CD8-positive, alpha-beta T cell (primary cell): ENCODE measurements at regions of chr22 and their contacts with region 1.

Region 1: GRCh38 chr22:40856513-40857308 is at the starts of genes ST13 and XPNPEP3:
- DNase-seq: peak; percentile 92 to 98 (median 97)
- ATAC-seq: peak; percentile 88
- H3K4me3 ChIP-seq: peak within 1 kb of the TSS; percentile 85 to 97
- H3K4me3 Mint-ChIP-seq: peak within 1 kb of the TSS; percentile 98
- H3K27ac ChIP-seq: peak within 1 kb of the TSS; percentile 97 to 99
- H3K27ac Mint-ChIP-seq: peak within 1 kb of the TSS; percentile 100
- H3K4me1 ChIP-seq: peaks cover 40% of the 10 kb centered on the region
- H3K4me1 Mint-ChIP-seq: peaks cover 65% of the 10 kb centered on the region
- H3K27me3 ChIP-seq: no peaks in the 10 kb centered on the region
- H3K27me3 Mint-ChIP-seq: no peaks in the 10 kb centered on the region
- CTCF ChIP-seq: peak; percentile 42
- total RNA-seq, gene ST13: 143 to 160 TPM
- total RNA-seq, gene XPNPEP3: 13.9 to 15.2 TPM

Region 2: GRCh38 chr22:40636380-40637182 is 220.1 kb before region 1 on chr22 and contains the start of gene MRTFA:
- CTCF ChIA-PET with region 1: no interaction called
- POLR2A ChIA-PET with region 1: interaction called, 3 read pairs
- intact Hi-C with region 1: loop called (anchors 1 kb)
- DNase-seq: peak; percentile 98 to 100 (median 99)
- ATAC-seq: peak; percentile 93
- H3K4me3 ChIP-seq: peak within 1 kb of the TSS; percentile 98 to 100
- H3K4me3 Mint-ChIP-seq: peak within 1 kb of the TSS; percentile 99
- H3K27ac ChIP-seq: peak within 1 kb of the TSS; percentile 89
- H3K27ac Mint-ChIP-seq: peak within 1 kb of the TSS; percentile 98
- H3K4me1 ChIP-seq: peaks cover 34% of the 10 kb centered on the region
- H3K4me1 Mint-ChIP-seq: peaks cover 45% of the 10 kb centered on the region
- H3K27me3 ChIP-seq: no peaks in the 10 kb centered on the region
- H3K27me3 Mint-ChIP-seq: no peaks in the 10 kb centered on the region
- CTCF ChIP-seq: no peak
- total RNA-seq, gene MRTFA: 53.7 to 56.7 TPM

Region 3: DNA sequence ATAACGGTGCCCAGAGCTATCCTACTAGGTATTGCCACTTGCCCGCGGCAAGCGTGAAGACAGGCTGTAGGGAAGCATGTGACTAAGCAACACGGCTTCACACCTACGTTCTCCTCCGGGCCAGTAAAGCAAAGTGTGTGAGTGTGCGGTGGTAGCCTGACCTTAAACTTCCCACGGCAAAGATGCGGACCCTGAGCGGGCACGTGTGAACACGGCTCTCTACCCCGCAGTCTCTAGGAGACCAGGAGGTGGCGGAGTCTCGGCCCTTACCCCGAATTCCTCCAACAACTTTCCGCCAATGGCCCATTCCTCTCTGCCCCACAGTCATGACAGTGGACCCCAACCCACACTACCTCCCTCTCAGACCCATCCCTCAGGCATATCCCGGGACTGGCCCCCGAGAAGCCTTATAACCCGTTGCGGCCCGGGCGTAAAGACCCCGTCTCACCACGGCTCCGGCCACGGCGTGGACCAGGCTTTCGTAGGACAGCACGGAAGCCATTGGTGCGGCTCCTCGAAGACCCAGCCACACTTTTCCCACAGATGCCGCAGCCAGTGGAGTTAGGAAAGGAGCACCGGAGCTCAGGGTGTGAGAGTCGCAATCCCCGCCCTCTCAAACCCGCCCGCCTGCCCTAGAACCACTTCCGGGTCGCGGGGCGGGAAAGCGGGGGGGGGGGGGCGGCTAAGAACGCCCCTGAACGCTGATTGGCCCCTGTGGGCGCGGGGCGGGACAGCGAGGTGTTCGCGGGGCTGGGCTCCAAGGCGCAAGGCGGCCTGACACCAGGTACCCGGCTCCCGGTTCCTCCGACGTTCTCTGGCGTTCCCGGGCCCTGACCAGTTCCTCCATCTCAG is 37.7 kb before region 1 on chr22 and contains the start of gene SLC25A17:
- CTCF ChIA-PET with region 1: interaction called, 5 read pairs
- POLR2A ChIA-PET with region 1: interaction called, 6 read pairs
- intact Hi-C with region 1: loop called (anchors 1 kb)
- DNase-seq: peak; percentile 72 to 93 (median 88)
- ATAC-seq: peak; percentile 88
- H3K4me3 ChIP-seq: peak within 1 kb of the TSS; percentile 87 to 91
- H3K4me3 Mint-ChIP-seq: peak within 1 kb of the TSS; percentile 96
- H3K27ac ChIP-seq: peak within 1 kb of the TSS; percentile 69 to 81
- H3K27ac Mint-ChIP-seq: peak within 1 kb of the TSS; percentile 88
- H3K4me1 ChIP-seq: peaks cover 18% of the 10 kb centered on the region
- H3K4me1 Mint-ChIP-seq: peaks cover 41% of the 10 kb centered on the region
- H3K27me3 ChIP-seq: no peaks in the 10 kb centered on the region
- H3K27me3 Mint-ChIP-seq: no peaks in the 10 kb centered on the region
- CTCF ChIP-seq: no peak
- total RNA-seq, gene SLC25A17: 3.2 to 4.0 TPM

Region 4: GRCh38 chr22:40898850-40899357 is 42.2 kb after region 1 on chr22:
- CTCF ChIA-PET with region 1: interaction called, 3 read pairs
- POLR2A ChIA-PET with region 1: no interaction called
- intact Hi-C with region 1: loop called in 1 of 2 experiments (anchors 2 kb)
- DNase-seq: peak in 2 of 9 experiments; percentile 54 to 67
- ATAC-seq: peak; percentile 38
- H3K4me3 ChIP-seq: no peak overlapping the region
- H3K4me3 Mint-ChIP-seq: no peak overlapping the region
- H3K27ac ChIP-seq: no peak overlapping the region
- H3K27ac Mint-ChIP-seq: no peak overlapping the region
- H3K4me1 ChIP-seq: no peaks in the 10 kb centered on the region
- H3K4me1 Mint-ChIP-seq: peaks cover 5% of the 10 kb centered on the region
- H3K27me3 ChIP-seq: no peaks in the 10 kb centered on the region
- H3K27me3 Mint-ChIP-seq: no peaks in the 10 kb centered on the region
- CTCF ChIP-seq: peak; percentile 40

Region 5: GRCh38 chr22:41197038-41197972 is 340.6 kb after region 1 on chr22:
- CTCF ChIA-PET with region 1: no interaction called
- POLR2A ChIA-PET with region 1: no interaction called
- intact Hi-C with region 1: loop called in 1 of 2 experiments (anchors 5 kb)
- DNase-seq: peak; percentile 52 to 91 (median 82)
- ATAC-seq: peak; percentile 92
- H3K4me3 ChIP-seq: peak overlapping the region; percentile 91 to 94
- H3K4me3 Mint-ChIP-seq: peak overlapping the region; percentile 91
- H3K27ac ChIP-seq: no peak overlapping the region
- H3K27ac Mint-ChIP-seq: no peak overlapping the region
- H3K4me1 ChIP-seq: peaks cover 16% of the 10 kb centered on the region
- H3K4me1 Mint-ChIP-seq: peaks cover 14% of the 10 kb centered on the region
- H3K27me3 ChIP-seq: peaks cover 0 to 3% of the 10 kb centered on the region in 2 experiments
- H3K27me3 Mint-ChIP-seq: no peaks in the 10 kb centered on the region
- CTCF ChIP-seq: no peak

Region 6: GRCh38 chr22:41448189-41448808 is 591.6 kb after region 1 on chr22:
- CTCF ChIA-PET with region 1: no interaction called
- POLR2A ChIA-PET with region 1: no interaction called
- intact Hi-C with region 1: loop called in 1 of 2 experiments (anchors 10 kb)
- DNase-seq: peak; percentile 77 to 97 (median 88)
- ATAC-seq: peak; percentile 70
- H3K4me3 ChIP-seq: peak overlapping the region; percentile 79 to 96
- H3K4me3 Mint-ChIP-seq: peak overlapping the region; percentile 90
- H3K27ac ChIP-seq: peak overlapping the region; percentile 78 to 99
- H3K27ac Mint-ChIP-seq: peak overlapping the region; percentile 98
- H3K4me1 ChIP-seq: peaks cover 11% of the 10 kb centered on the region
- H3K4me1 Mint-ChIP-seq: peaks cover 23% of the 10 kb centered on the region
- H3K27me3 ChIP-seq: no peaks in the 10 kb centered on the region
- H3K27me3 Mint-ChIP-seq: no peaks in the 10 kb centered on the region
- CTCF ChIP-seq: no peak

Region 7: GRCh38 chr22:41543854-41544670 is 687.4 kb after region 1 on chr22 and contains the start of gene POLR3H:
- CTCF ChIA-PET with region 1: no interaction called
- POLR2A ChIA-PET with region 1: no interaction called
- intact Hi-C with region 1: loop called (anchors 2 kb)
- DNase-seq: peak; percentile 92 to 99 (median 97)
- ATAC-seq: peak; percentile 98
- H3K4me3 ChIP-seq: peak within 1 kb of the TSS; percentile 75 to 95
- H3K4me3 Mint-ChIP-seq: peak within 1 kb of the TSS; percentile 98
- H3K27ac ChIP-seq: peak within 1 kb of the TSS; percentile 82 to 83
- H3K27ac Mint-ChIP-seq: peak within 1 kb of the TSS; percentile 94
- H3K4me1 ChIP-seq: peaks cover 30% of the 10 kb centered on the region
- H3K4me1 Mint-ChIP-seq: peaks cover 40% of the 10 kb centered on the region
- H3K27me3 ChIP-seq: no peaks in the 10 kb centered on the region
- H3K27me3 Mint-ChIP-seq: no peaks in the 10 kb centered on the region
- CTCF ChIP-seq: no peak
- total RNA-seq, gene POLR3H: 11.2 to 11.7 TPM